HepG2 (cell line): ENCODE measurements at regions of chr5 and their contacts with region 1.

Region 1: GRCh38 chr5:143403593-143404415 is at the start of gene NR3C1:
- DNase-seq: peak; percentile 58
- ATAC-seq: peak; percentile 68
- H3K4me3 ChIP-seq: peak within 1 kb of the TSS; percentile 80 to 96 (median 95)
- H3K27ac ChIP-seq: peak within 1 kb of the TSS; percentile 96
- H3K4me1 ChIP-seq: peaks cover 44% of the 10 kb centered on the region
- H3K27me3 ChIP-seq: no peaks in the 10 kb centered on the region; a peak in 1 of 5 replicates
- CTCF ChIP-seq: peak; percentile 56
- EP300 ChIP-seq: no peak
- POLR2A ChIP-seq: peak; percentile 25 to 61; a peak in 3 of 4 replicates
- RAD21 ChIP-seq: peak; percentile 57
- total RNA-seq, gene NR3C1: 24.3 and 30.0 TPM in 2 replicates

Region 2: DNA sequence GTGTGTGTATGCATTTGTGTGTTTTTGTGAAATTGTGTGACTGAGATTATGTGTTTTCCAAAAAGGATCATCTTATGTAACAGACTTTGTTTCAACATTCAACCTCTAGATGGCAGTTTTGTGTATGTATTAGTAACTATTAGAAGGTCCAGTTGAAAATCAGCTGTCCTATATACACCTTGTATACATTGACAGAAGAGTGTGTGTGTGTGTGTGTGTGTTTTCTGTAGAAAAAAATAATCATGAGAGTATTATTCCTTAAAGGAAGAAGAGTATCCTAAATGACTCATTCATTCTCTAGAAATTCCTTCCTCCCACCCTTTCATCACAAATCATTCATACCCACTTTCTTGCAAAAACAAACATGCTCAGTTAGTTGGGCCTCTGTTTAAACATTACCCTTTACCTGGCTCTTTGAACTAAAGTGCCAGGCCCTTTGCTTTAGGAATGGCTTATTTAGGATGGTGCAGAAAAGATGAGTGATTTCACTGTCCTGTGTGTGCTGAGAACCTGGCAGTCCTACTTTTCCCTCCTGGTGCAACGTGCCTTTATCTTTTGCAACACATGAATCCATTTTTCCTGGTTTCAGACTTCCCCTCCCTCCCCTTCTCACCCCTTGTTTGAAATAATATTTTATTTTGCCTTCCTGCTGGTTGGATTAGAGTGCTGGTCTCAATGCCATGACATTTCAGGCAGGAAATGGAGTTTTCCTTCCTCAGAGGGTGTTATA is 481.4 kb before region 1 on chr5:
- CTCF ChIA-PET with region 1: no interaction called
- POLR2A ChIA-PET with region 1: no interaction called
- in situ Hi-C with region 1: no loop called
- intact Hi-C with region 1: loop called (anchors 5 kb)
- DNase-seq: peak; percentile 95
- ATAC-seq: peak; percentile 95
- H3K4me3 ChIP-seq: no peak overlapping the region
- H3K27ac ChIP-seq: peak overlapping the region; percentile 66
- H3K4me1 ChIP-seq: peaks cover 37% of the 10 kb centered on the region
- H3K27me3 ChIP-seq: no peaks in the 10 kb centered on the region
- CTCF ChIP-seq: peak; percentile 65
- EP300 ChIP-seq: peak in 1 of 2 experiments; percentile 91; a peak in 2 of 4 replicates
- POLR2A ChIP-seq: no peak
- RAD21 ChIP-seq: no peak

Region 3: DNA sequence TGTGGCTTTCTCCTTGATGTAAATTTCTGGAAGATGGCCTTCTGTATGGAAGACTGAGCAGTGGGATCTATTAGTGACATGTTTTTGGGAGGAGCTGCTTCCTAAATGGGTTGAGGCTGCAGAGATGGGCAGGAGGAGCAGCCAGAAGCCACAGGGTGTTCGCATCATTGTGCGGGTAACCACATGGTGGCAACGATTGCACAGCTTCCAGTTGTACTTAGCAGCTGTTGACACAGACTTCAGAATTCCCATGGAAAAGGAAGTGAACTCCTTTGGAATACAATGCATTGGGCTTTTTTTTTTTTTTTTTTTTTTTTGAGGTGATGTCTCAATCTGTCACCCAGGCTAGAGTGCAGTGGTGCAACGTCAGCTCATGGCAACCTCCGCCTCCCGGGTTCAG is 297.6 kb before region 1 on chr5:
- CTCF ChIA-PET with region 1: no interaction called
- POLR2A ChIA-PET with region 1: interaction called, 3 read pairs
- in situ Hi-C with region 1: no loop called
- intact Hi-C with region 1: loop called (anchors 2 kb)
- DNase-seq: peak; percentile 80
- ATAC-seq: peak; percentile 94
- H3K4me3 ChIP-seq: no peak overlapping the region
- H3K27ac ChIP-seq: no peak overlapping the region
- H3K4me1 ChIP-seq: peaks cover 43% of the 10 kb centered on the region
- H3K27me3 ChIP-seq: no peaks in the 10 kb centered on the region
- CTCF ChIP-seq: peak; percentile 77
- EP300 ChIP-seq: no peak
- POLR2A ChIP-seq: no peak
- RAD21 ChIP-seq: peak; percentile 62

Region 4: GRCh38 chr5:143506881-143507551 is 103.2 kb after region 1 on chr5:
- CTCF ChIA-PET with region 1: no interaction called
- POLR2A ChIA-PET with region 1: interaction called, 13 read pairs
- in situ Hi-C with region 1: no loop called
- intact Hi-C with region 1: loop called (anchors 1 kb)
- DNase-seq: peak; percentile 99
- ATAC-seq: peak; percentile 98
- H3K4me3 ChIP-seq: peak overlapping the region in 2 of 3 experiments; percentile 0 to 49; a peak in 1 of 6 replicates
- H3K27ac ChIP-seq: peak overlapping the region; percentile 99
- H3K4me1 ChIP-seq: peaks cover 49% of the 10 kb centered on the region
- H3K27me3 ChIP-seq: no peaks in the 10 kb centered on the region
- CTCF ChIP-seq: peak; percentile 58
- EP300 ChIP-seq: peak; percentile 76 to 99
- POLR2A ChIP-seq: peak in 1 of 2 experiments; percentile 46; a peak in 1 of 4 replicates
- RAD21 ChIP-seq: peak; percentile 41; the same call in 1 of the 2 replicates

Region 5: GRCh38 chr5:143592648-143593047 is 188.8 kb after region 1 on chr5:
- CTCF ChIA-PET with region 1: no interaction called
- POLR2A ChIA-PET with region 1: interaction called, 6 read pairs
- in situ Hi-C with region 1: no loop called
- intact Hi-C with region 1: loop called (anchors 1 kb)
- DNase-seq: no peak
- ATAC-seq: no peak
- H3K4me3 ChIP-seq: no peak overlapping the region
- H3K27ac ChIP-seq: peak overlapping the region; percentile 39
- H3K4me1 ChIP-seq: peaks cover 86% of the 10 kb centered on the region
- H3K27me3 ChIP-seq: no peaks in the 10 kb centered on the region
- CTCF ChIP-seq: no peak
- EP300 ChIP-seq: no peak
- POLR2A ChIP-seq: no peak
- RAD21 ChIP-seq: no peak

Region 6: DNA sequence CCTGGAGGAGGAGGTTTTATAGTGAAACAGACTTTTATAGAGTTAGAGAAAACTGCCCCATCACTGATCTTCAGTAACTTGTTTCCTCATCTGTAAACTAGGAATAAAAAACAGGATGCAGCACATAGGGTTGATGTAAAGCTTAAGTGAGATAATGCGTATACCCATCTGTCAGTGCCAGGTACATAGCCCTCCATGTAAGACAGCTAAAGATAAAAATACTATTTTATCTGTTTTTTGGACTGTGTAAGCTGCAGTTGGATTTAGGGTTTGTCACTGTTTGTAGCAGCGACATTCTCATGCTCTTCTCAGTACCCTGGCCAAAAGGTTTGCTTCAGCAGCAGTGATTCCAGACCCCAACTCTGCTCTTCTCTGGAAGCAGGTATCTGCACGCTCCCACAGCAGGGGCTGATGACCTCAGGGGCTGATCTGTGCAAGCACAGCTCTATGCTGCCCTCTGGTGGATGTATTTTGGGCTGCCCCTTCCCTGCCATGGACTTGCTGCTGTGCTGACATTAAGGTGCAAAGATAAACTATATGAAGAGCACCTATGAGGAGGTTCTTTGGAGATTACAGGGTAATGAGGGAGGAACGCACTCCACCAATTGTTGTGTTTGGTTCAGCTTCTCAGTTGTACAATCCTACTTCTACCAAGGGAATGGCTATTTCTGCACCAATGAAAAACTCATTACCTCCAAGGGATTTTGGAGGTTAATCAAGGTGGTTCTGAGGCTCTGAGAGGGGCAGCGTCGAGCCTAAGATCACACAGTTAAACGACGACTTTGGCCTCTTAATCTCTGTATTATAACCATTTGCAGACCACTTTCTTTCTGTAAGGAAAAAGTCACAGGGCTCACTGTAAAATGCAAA is 421.3 kb after region 1 on chr5:
- CTCF ChIA-PET with region 1: no interaction called
- POLR2A ChIA-PET with region 1: no interaction called
- in situ Hi-C with region 1: no loop called
- intact Hi-C with region 1: loop called (anchors 2 kb)
- DNase-seq: peak; percentile 68
- ATAC-seq: peak; percentile 100
- H3K4me3 ChIP-seq: no peak overlapping the region
- H3K27ac ChIP-seq: no peak overlapping the region
- H3K4me1 ChIP-seq: peaks cover 14% of the 10 kb centered on the region; the same call in 1 of the 2 replicates
- H3K27me3 ChIP-seq: no peaks in the 10 kb centered on the region; a peak in 1 of 5 replicates
- CTCF ChIP-seq: peak; percentile 97
- EP300 ChIP-seq: no peak
- POLR2A ChIP-seq: no peak
- RAD21 ChIP-seq: peak; percentile 97